Activated naive CD4-positive, alpha-beta T cell treated with anti-CD3 and anti-CD28 coated beads, Interleukin-2, amount 10 ng/mL, durations not matched to agents 7 days and 5 days (primary cell): ENCODE measurements at regions of chr22 and their contacts with region 1.

Region 1: DNA sequence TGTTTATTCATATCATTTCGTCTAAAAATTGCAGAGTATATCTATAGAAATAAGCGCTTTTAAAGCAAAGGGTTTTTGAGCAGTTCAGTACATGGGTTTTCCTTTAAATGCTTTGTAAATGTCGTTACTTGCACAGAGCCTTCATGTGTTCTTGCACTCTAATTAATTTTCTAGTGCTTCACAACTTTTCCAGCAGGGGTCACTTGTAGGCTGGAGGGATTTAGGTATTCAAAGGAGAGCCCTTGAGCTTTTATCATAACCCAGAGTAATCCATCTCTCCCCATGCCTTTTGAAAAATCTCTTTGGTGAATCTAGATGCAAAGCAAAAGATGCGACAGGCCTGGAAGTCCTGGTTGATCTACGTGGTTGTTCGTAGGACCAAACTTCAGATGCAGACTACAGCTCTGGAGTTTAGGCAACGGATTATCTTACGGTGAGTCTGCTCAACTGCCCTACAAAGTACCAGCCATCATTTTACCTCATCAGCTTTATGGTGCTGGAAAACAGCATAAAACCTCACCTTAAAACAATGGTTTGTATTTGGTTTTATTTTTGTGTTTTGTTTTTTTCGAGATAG is 60.4 kb downstream of the SFI1 start:
- DNase-seq: no peak
- H3K4me3 Mint-ChIP-seq: no peak overlapping the region
- H3K27ac Mint-ChIP-seq: no peak overlapping the region
- H3K4me1 Mint-ChIP-seq: no peaks in the 10 kb centered on the region
- H3K27me3 Mint-ChIP-seq: no peaks in the 10 kb centered on the region

Region 2: DNA sequence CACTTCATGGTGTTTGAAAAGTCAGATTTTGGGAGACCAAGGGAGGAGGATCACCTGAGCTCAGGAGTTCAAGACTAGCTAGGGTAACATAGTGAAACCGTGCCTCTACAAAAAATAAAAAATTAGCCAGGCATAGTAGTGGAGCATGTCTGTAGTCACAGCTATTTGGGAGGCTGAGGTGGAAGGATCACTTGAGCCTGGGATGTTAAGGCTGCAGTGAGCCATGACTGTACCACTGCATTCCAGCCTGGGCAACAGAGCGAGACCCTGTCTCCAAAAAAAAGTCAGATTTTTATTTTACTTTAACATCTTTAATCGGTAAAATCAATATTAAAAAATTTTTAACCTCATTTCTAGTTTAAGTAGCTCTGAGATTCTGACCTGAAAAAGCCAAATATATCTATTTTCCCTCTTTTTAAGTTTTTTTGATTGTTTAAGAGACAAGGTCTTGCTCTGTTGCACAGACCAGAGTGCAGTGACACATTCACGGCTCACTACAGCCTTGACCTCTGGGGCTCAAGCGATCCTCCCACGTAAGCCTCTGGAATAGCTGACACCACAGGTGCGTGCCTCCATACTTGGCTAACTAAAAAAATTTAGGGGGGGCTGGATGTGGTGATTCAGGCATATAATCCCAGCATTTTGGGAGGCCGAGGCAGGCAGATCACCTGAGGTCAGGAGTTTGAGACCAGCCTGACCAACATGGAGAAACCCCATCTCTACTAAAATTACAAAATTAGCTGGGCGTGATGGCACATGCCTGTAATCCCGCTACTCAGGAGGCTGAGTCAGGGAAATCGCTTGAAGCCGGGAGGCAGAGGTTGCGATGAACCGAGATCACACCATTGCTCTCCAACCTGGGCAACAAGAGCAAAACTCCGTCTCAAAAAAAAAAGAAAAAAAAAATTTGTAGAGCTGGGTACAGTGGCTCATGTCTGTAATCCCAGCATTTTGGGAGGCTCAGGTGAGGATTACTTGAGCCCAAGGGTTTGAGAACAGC is 11.9 kb before region 1 on chr22:
- CTCF ChIA-PET with region 1: interaction called, 17 read pairs
- DNase-seq: no peak
- H3K4me3 Mint-ChIP-seq: no peak overlapping the region
- H3K27ac Mint-ChIP-seq: no peak overlapping the region
- H3K4me1 Mint-ChIP-seq: no peaks in the 10 kb centered on the region
- H3K27me3 Mint-ChIP-seq: no peaks in the 10 kb centered on the region

Region 3: GRCh38 chr22:31630331-31631329 is 73.9 kb after region 1 on chr22:
- CTCF ChIA-PET with region 1: interaction called, 13 read pairs
- DNase-seq: peak; percentile 94
- H3K4me3 Mint-ChIP-seq: peak overlapping the region; percentile 83
- H3K27ac Mint-ChIP-seq: peak overlapping the region; percentile 92
- H3K4me1 Mint-ChIP-seq: peaks cover 42% of the 10 kb centered on the region
- H3K27me3 Mint-ChIP-seq: no peaks in the 10 kb centered on the region